Activated T-helper 1 cell treated with anti-CD3 and anti-CD28 coated beads, Interleukin-12 subunit alpha, Interleukin-12 subunit beta, Interleukin-2, Interleukin-4 antibody, amounts not matched to agents 30 ng/mL and 10 ng/mL and 1 ng/mL, durations not matched to agents 14 hours and 24 hours and 36 hours (primary cell): ENCODE measurements at regions of chr1 and their contacts with region 1.

Region 1: DNA sequence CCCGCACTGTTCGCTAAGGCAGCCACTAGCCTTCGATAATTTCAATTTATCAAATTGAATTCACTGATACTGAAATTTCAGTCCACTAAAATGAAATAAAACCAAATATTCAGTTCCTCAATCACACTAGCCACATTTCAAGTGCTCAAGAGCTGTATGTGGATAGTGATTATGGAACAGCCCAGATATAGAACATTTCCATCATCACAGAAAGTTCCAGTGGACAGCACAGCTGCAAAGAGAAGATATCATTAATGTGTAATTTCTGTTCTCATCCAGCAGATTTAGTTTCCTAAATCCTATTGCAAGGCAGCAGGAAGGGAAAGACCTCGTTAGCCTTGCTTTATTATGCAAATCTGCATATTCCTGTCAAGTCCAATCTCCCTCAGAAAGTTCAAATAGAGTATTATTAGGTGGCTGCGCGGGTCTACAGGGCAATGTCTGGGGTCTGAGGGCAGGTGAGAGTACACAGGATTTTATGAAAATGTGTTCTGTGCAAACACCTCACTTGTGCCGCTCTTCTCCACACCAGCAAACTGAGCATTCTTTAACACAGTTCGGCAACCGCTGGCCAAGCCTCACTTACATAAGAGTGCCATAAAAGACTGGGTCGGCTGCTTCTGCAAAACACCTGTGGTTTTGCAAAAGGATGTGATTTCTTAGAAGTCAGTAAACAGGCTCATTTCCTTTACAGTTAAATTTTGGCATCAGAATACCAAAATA is 22.4 kb downstream of the CAPZB start:
- DNase-seq: peak; percentile 65
- H3K4me3 Mint-ChIP-seq: peak overlapping the region; percentile 79
- H3K27ac Mint-ChIP-seq: peak overlapping the region; percentile 85
- H3K4me1 Mint-ChIP-seq: peaks cover 81% of the 10 kb centered on the region
- H3K27me3 Mint-ChIP-seq: no peaks in the 10 kb centered on the region

Region 2: DNA sequence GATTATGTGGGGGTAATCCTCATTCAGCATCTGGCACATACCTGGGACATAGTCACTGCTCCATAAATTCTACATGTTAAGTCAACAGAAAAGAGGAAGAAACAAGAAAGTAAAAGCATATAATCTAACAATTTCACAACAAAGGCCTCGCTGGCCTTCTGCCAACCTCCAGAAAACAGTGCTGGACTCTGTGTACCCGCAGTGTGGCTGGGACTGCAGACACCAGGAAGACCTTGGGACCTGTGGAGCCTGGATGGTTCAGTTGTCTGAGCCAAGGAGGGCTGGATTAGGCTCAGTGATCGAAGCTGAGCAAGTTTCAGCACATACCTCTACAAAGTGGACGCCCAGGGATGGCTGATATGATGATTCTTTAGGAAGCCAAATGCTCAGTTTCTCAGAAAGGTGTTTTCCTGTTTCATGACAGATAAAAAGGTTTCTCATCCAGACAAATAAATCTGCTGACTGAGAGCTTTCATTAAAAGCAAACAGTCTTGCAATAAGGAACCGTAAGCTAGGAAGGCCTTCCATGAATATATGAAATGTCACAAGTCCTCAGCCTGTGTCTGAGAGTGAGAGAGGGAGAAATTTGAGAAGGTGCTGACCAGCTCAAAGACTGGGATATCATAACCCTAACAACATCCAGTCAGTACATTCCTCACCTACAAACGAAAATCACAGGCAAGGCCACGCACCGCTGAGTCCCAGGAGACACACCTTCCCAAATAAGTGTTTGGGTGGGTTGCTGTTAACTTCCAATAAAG is 26.0 kb before region 1 on chr1:
- intact Hi-C with region 1: loop called (anchors 1 kb)
- DNase-seq: no peak
- H3K4me3 Mint-ChIP-seq: peak overlapping the region; percentile 30
- H3K27ac Mint-ChIP-seq: peak overlapping the region; percentile 83
- H3K4me1 Mint-ChIP-seq: peaks cover 81% of the 10 kb centered on the region
- H3K27me3 Mint-ChIP-seq: no peaks in the 10 kb centered on the region

Region 3: DNA sequence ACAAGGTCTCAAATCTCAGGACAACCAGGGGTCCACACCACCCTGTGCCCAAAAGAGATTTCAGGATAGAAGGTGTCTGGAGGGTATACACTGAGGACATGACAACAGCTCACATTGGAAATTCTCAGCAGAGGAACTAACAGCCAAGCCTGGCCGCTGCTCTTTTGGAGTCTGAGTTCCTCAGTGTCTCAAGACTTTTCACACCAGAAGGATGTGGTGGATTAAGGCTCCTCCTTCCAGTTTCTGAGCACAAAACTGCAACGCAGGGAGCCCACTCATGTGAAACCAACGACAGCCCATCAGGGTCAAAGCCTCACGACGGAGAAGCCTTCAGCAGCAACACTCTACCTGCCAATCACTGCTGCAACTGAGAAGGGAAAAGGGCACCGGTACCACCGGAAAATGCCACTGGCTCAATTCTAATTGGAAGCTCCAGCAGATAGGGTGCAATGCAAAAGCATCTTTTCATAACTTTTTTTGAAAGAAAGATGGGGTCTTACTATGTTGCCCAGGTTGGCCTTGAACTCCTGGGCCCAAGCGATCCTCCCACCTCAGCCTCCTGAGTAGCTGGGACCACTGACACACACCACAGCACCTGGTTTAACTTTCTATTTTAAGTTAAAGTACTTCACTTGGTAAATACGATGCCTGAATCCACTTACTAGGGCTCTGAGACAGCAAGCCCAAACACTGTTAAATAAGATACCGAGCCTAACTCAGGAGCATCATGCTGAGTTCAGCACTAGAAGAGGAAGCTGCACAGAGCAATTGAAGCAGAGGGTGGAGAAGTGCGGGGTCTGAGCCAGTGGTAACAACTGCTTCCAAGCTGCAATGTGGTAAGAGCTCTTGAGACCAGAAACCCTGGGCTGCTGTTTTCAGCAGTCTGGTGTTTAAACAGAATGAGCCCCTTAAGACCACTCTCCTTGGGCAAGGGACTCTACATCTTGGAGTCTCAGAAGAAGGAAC is 14.6 kb after region 1 on chr1:
- intact Hi-C with region 1: loop called (anchors 1 kb)
- DNase-seq: no peak
- H3K4me3 Mint-ChIP-seq: peak overlapping the region; percentile 75
- H3K27ac Mint-ChIP-seq: peak overlapping the region; percentile 91
- H3K4me1 Mint-ChIP-seq: peaks cover 94% of the 10 kb centered on the region
- H3K27me3 Mint-ChIP-seq: no peaks in the 10 kb centered on the region